ENCODE measurements at regions of chr6 and their contacts with region 1.

Region 1: DNA sequence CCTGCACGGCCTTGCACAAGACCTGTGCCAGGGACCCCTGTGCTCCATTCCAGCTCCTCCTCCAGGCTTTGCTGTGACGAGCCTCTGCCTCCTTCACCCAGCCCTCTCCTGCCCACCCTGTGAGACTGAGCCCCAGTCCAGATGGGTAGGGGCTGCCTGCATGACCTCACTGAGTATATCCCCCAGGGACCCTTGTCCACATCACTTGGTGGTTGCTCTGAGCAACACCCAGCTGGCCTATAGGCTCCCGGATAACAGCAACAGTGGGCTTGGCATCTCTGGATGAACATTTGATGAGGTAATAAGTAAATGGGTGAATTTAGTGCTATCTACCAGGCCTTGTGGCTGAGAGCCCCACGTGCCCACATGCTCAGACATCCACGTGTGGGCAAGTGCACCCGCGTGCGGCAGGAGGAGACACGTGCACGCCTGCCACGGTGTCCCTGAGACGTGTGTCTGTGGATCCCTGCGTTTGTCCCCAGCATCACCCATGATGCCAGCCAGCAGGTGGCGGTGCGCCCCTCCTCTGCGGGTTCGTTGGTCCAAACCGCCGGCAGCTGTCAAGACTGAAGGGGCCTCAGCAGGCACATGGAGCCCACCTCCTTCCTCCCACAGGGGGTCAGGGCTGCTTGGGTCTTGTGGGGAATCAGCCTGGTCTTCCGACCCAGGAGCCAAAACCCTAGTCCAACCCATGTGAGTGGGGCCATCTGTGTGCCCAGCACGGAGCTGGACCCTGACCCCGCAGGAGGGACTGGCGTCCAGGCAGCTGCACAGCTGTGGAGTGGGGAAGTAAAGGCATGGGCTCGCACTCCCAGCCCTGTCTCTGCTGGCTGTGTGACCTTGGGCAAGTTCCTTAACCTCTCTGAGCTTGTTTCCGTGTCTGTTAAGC is 45.9 kb downstream of the FGD2 start:
- DNase-seq: peak; percentile 44
- ATAC-seq: peak; percentile 89
- H3K4me3 ChIP-seq: no peak overlapping the region
- H3K27ac ChIP-seq: no peak overlapping the region
- H3K4me1 ChIP-seq: peaks cover 8 to 38% of the 10 kb centered on the region in 2 experiments
- H3K27me3 ChIP-seq: no peaks in the 10 kb centered on the region
- CTCF ChIP-seq: peak in 2 of 3 experiments; percentile 90 to 91; a peak in 4 of 6 replicates
- POLR2A ChIP-seq: no peak
- RAD21 ChIP-seq: no peak

Region 2: DNA sequence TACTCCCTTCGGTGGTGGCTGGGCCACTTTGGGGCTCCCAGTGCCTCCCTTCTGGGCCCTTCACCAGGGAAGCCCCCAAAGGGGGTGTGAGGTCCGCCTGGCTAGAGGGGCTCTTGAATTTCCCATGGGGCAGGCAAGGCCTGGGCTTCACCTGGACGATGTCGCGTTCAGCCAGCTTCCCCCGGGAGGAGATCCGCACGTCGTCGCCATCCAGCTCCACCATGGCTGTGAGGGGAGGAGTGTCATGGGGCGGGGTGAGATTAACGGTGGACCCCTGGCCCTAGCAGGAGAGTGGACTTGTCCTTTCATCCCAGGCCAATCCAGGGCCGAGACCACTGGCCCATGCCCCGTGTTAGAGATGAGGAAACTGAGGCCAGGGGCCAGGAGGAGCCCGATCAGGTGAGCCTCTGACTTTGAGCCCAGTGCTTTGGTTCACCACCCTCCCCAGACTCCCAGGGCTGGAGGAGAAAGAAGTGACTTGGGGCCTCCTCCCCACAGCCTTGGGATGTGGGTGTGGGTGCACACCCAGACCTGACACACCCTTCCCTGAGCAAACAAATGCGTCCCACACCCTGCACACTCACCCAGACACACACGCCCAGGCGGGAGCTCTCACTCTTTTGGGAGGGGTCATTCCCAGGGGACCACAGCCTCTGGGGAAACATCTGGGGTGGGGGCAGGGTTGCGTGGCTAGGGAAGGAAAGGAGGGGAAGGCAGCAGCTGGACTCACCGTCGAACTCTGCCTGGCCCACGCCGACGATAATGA is 307.7 kb before region 1 on chr6:
- CTCF ChIA-PET with region 1: no interaction called
- POLR2A ChIA-PET with region 1: no interaction called
- RAD21 ChIA-PET with region 1: no interaction called
- intact Hi-C with region 1: no loop called
- DNase-seq: no peak
- ATAC-seq: no peak
- H3K4me3 ChIP-seq: no peak overlapping the region
- H3K27ac ChIP-seq: no peak overlapping the region
- H3K4me1 ChIP-seq: peaks cover 0 to 4% of the 10 kb centered on the region in 2 experiments; a peak in 1 of 4 replicates
- H3K27me3 ChIP-seq: no peaks in the 10 kb centered on the region
- CTCF ChIP-seq: no peak
- POLR2A ChIP-seq: no peak
- RAD21 ChIP-seq: no peak

Region 3: GRCh38 chr6:37029249-37029971 is 22.0 kb before region 1 on chr6:
- CTCF ChIA-PET with region 1: interaction called, 13 read pairs
- POLR2A ChIA-PET with region 1: interaction called, 3 read pairs
- RAD21 ChIA-PET with region 1: no interaction called
- intact Hi-C with region 1: no loop called
- DNase-seq: peak; percentile 79
- ATAC-seq: peak; percentile 74
- H3K4me3 ChIP-seq: no peak overlapping the region
- H3K27ac ChIP-seq: no peak overlapping the region
- H3K4me1 ChIP-seq: peaks cover 16 to 40% of the 10 kb centered on the region in 2 experiments
- H3K27me3 ChIP-seq: no peaks in the 10 kb centered on the region
- CTCF ChIP-seq: peak in 2 of 3 experiments; percentile 70 to 80; a peak in 4 of 6 replicates
- POLR2A ChIP-seq: no peak
- RAD21 ChIP-seq: no peak

Region 4: DNA sequence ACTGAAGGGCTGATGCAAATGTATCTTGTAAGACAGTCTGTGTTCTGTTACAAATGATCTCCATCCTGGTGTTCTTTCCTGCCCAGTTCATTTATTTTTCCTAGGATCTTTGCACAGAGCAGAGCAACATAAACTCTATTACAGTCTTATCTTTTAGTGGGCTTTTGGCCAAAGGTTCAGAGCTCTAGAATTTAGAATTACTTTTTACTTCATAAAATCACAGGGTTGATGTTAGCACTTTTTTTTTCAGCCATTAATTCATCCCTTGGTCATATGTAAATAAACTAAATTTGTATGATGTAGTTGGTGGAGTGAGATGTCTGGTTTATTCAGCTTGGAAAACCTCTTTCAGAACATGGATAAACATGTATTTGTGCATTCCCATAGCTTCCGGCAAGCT is 950.0 kb after region 1 on chr6:
- CTCF ChIA-PET with region 1: no interaction called
- POLR2A ChIA-PET with region 1: no interaction called
- RAD21 ChIA-PET with region 1: no interaction called
- intact Hi-C with region 1: no loop called
- DNase-seq: no peak
- ATAC-seq: no peak
- H3K4me3 ChIP-seq: no peak overlapping the region
- H3K27ac ChIP-seq: no peak overlapping the region
- H3K4me1 ChIP-seq: no peaks in the 10 kb centered on the region
- H3K27me3 ChIP-seq: no peaks in the 10 kb centered on the region
- CTCF ChIP-seq: no peak
- POLR2A ChIP-seq: no peak
- RAD21 ChIP-seq: no peak

Measured in HCT116 (cell line).